ENCODE measurements at regions of chr10 and their contacts with region 1.

Region 1: DNA sequence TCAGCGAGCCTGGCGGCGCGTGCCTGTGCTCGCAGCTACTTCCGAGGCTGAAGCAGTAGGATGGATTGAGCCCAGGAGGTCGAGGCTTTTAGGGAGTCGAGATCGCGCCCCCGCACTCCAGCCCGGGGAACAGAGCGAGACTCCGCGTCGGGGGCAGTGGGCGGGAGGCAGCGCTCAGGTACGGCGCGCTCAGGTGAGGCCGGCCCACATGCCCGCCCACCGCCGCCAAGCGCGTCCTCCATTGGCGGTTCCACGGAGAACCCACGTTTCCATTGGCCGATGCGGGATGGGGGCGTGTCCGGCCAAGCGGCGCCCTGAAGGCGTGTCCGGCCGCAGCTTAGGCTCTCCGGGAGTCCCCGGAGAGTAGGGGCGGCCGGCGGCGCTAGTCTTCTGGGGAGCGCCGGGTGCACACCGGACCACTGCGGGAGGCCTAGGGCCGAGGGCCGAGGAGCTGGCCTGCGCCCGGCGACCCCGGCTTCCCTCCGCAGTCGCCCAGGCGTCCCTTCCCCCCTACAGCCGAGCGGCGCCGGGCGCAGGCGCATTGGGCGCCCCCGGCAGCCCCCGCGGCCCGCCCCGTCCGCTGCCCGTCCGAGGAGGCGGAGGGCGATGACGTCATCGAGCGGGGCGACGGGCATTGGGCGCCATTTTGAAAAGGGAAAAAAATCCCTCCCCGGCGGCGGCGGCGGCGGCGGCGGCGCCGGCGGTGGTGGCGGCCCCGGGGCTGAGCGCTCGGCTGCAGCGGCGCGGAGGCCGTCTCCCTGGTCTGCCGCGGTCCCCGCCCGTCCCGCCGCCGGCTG is at the start of gene PPP2R2D:
- DNase-seq: peak; percentile 96
- H3K4me3 Mint-ChIP-seq: peak within 1 kb of the TSS; percentile 86
- H3K27ac Mint-ChIP-seq: peak within 1 kb of the TSS; percentile 92
- H3K4me1 Mint-ChIP-seq: peaks cover 45% of the 10 kb centered on the region
- H3K27me3 Mint-ChIP-seq: peaks cover 7% of the 10 kb centered on the region
- total RNA-seq, gene PPP2R2D: 31.9 to 32.3 TPM

Region 2: GRCh38 chr10:131885391-131886161 is 15.0 kb before region 1 on chr10:
- CTCF ChIA-PET with region 1: interaction called, 20 read pairs
- POLR2A ChIA-PET with region 1: interaction called, 3 read pairs
- intact Hi-C with region 1: no loop called
- DNase-seq: peak; percentile 86
- H3K4me3 Mint-ChIP-seq: no peak overlapping the region
- H3K27ac Mint-ChIP-seq: peak overlapping the region; percentile 29
- H3K4me1 Mint-ChIP-seq: peaks cover 3% of the 10 kb centered on the region
- H3K27me3 Mint-ChIP-seq: peaks cover 2% of the 10 kb centered on the region

Region 3: GRCh38 chr10:131928248-131929095 is 27.9 kb after region 1 on chr10:
- CTCF ChIA-PET with region 1: interaction called, 4 read pairs
- POLR2A ChIA-PET with region 1: interaction called, 5 read pairs
- intact Hi-C with region 1: loop called (anchors 1 kb)
- DNase-seq: peak; percentile 81
- H3K4me3 Mint-ChIP-seq: peak overlapping the region; percentile 33
- H3K27ac Mint-ChIP-seq: peak overlapping the region; percentile 88
- H3K4me1 Mint-ChIP-seq: peaks cover 68% of the 10 kb centered on the region
- H3K27me3 Mint-ChIP-seq: no peaks in the 10 kb centered on the region

Region 4: DNA sequence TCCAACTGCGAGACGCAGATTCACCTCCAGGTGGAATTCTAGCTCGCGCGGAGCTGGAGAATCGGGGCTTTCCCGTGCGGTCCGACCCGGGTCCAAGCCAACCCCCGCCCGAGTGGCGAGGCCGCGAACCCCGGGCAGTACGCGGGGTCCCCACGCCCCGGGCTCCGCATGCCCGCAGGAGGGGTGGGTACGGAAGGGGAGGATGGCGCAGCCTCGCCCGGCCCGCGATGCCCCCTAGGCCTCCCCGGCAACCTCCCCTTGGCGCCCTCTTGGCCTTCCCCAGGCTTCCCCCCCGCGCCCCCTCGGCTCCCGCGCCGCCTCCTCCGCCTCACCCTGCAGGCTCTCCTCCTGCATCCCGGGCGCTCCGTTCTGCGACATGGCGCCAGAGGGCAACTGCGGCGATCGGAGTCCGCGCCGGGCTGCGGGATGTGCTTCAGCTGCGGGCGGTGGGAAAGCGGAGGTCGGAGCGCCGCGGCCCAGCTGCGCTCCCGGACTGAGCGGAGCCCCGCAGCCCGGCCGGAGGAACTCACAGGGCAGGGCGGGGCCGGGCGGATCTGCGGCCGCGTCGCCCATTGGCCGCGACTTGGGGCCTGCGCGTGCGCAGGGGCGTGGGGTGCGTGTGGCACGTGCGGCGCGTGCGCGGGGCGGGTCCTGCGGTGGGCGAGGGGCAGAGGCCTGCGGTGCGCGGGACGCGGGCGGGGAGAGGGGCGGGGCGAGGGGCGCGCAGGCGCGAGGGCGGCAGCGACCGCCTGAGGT is 81.1 kb after region 1 on chr10 and contains the start of gene BNIP3:
- CTCF ChIA-PET with region 1: no interaction called
- POLR2A ChIA-PET with region 1: interaction called, 8 read pairs
- intact Hi-C with region 1: loop called (anchors 1 kb)
- DNase-seq: peak; percentile 95
- H3K4me3 Mint-ChIP-seq: peak within 1 kb of the TSS; percentile 82
- H3K27ac Mint-ChIP-seq: peak within 1 kb of the TSS; percentile 65
- H3K4me1 Mint-ChIP-seq: peaks cover 31% of the 10 kb centered on the region
- H3K27me3 Mint-ChIP-seq: no peaks in the 10 kb centered on the region
- total RNA-seq, gene BNIP3: 84.9 to 86.9 TPM

Region 5: DNA sequence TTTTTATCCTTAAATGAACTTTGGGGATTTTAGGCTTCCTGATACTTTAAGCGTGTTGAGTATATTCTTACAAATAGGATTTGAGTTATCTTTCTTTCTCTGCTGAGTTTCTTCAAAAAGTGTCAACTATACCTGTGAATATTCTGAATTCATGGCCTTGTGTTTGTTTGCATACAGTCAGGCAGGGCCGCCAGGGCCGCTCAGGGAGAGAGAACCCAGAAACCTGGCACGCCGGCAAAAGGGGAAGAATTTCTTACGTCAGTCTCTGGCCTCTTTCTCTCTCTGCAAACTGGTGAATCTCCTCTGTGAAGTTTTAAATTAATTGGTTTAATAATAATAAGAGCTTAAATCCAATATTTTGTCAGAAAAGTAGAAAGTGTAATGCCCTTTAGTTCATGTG is 110.5 kb after region 1 on chr10:
- CTCF ChIA-PET with region 1: no interaction called
- POLR2A ChIA-PET with region 1: no interaction called
- intact Hi-C with region 1: no loop called
- DNase-seq: no peak
- H3K4me3 Mint-ChIP-seq: no peak overlapping the region
- H3K27ac Mint-ChIP-seq: no peak overlapping the region
- H3K4me1 Mint-ChIP-seq: no peaks in the 10 kb centered on the region
- H3K27me3 Mint-ChIP-seq: peaks cover 9% of the 10 kb centered on the region

Region 6: GRCh38 chr10:132158122-132158741 is 257.7 kb after region 1 on chr10:
- CTCF ChIA-PET with region 1: no interaction called
- POLR2A ChIA-PET with region 1: no interaction called
- intact Hi-C with region 1: loop called (anchors 5 kb)
- DNase-seq: peak; percentile 58
- H3K4me3 Mint-ChIP-seq: no peak overlapping the region
- H3K27ac Mint-ChIP-seq: peak overlapping the region; percentile 56
- H3K4me1 Mint-ChIP-seq: peaks cover 27% of the 10 kb centered on the region
- H3K27me3 Mint-ChIP-seq: no peaks in the 10 kb centered on the region

Region 7: GRCh38 chr10:132536971-132537712 is 636.6 kb after region 1 on chr10:
- CTCF ChIA-PET with region 1: no interaction called
- POLR2A ChIA-PET with region 1: no interaction called
- intact Hi-C with region 1: loop called (anchors 2 kb)
- DNase-seq: peak; percentile 100
- H3K4me3 Mint-ChIP-seq: peak overlapping the region; percentile 61
- H3K27ac Mint-ChIP-seq: no peak overlapping the region
- H3K4me1 Mint-ChIP-seq: peaks cover 46% of the 10 kb centered on the region
- H3K27me3 Mint-ChIP-seq: peaks cover 2% of the 10 kb centered on the region

Measured in activated CD4-positive, alpha-beta memory T cell treated with anti-CD3 and anti-CD28 coated beads for 36 hours (primary cell).